ENCODE measurements at regions of chr6 and their contacts with region 1.

Region 1: DNA sequence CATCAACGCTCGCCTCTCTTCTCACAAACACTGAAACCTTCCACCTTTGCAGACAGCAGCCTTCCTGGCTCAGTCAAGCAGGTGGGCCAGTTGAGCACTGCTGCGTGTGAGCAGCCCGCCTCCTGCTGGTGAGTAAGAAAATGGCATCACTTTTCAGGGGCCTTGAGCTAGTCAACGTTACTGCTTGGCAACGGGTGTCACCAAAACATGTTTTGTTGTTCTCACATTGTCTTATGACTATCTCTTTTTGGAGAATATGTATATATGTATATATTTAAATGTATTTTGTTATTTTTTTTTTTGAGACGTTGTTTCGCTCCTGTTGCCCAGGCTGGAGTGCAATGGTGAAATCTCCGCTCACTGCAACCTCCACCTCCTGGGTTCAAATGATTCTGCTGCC is 97.0 kb upstream of the AGPAT4 start:
- DNase-seq: peak; percentile 77
- H3K4me3 Mint-ChIP-seq: no peak overlapping the region
- H3K27ac Mint-ChIP-seq: no peak overlapping the region
- H3K4me1 Mint-ChIP-seq: peaks cover 13% of the 10 kb centered on the region
- H3K27me3 Mint-ChIP-seq: no peaks in the 10 kb centered on the region
- CTCF ChIP-seq: peak; percentile 95

Region 2: GRCh38 chr6:160520043-160520904 is 850.6 kb before region 1 on chr6:
- CTCF ChIA-PET with region 1: interaction called, 6 read pairs
- POLR2A ChIA-PET with region 1: no interaction called
- intact Hi-C with region 1: loop called (anchors 5 kb)
- DNase-seq: peak; percentile 75
- H3K4me3 Mint-ChIP-seq: peak overlapping the region; percentile 93
- H3K27ac Mint-ChIP-seq: peak overlapping the region; percentile 67
- H3K4me1 Mint-ChIP-seq: peaks cover 10% of the 10 kb centered on the region
- H3K27me3 Mint-ChIP-seq: no peaks in the 10 kb centered on the region
- CTCF ChIP-seq: no peak

Region 3: DNA sequence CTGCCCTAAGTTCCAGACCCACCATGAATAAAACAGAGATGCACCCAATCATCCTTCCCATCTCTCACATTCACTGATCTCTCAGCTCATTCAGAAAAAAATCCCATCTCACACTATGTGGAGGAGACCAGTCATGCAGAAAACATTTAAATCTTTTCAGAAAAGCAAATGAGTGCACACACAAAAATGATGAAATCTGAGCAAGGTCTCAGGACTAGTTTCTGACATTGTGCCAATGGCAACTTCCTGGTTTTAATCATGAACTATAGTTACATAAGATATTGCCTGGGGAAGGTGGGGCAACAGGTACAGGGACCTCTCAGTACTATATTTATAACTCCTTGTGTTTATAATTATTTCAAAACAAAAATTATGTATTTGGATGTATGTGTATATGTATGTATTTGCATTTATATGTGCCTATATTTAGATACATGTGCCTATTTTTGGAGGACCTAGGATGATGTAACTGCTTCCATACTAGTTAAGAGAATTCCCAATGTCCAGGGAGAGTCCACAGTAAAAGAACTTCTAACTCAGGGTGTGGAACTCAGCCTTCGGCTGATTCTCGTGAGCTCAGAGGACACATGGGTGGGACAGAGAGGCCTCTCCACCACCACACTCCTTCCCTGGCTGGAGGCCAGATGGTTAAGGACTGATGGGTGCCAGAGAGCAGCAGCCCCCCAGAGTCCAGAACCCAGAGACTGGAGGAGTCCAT is 451.0 kb before region 1 on chr6:
- CTCF ChIA-PET with region 1: interaction called, 113 read pairs
- POLR2A ChIA-PET with region 1: no interaction called
- intact Hi-C with region 1: no loop called
- DNase-seq: peak; percentile 97
- H3K4me3 Mint-ChIP-seq: no peak overlapping the region
- H3K27ac Mint-ChIP-seq: peak overlapping the region; percentile 59
- H3K4me1 Mint-ChIP-seq: peaks cover 23% of the 10 kb centered on the region
- H3K27me3 Mint-ChIP-seq: no peaks in the 10 kb centered on the region
- CTCF ChIP-seq: no peak

Region 4: GRCh38 chr6:161091972-161092701 is 278.7 kb before region 1 on chr6:
- CTCF ChIA-PET with region 1: interaction called, 14 read pairs
- POLR2A ChIA-PET with region 1: interaction called, 6 read pairs
- intact Hi-C with region 1: no loop called
- DNase-seq: peak; percentile 41
- H3K4me3 Mint-ChIP-seq: peak overlapping the region; percentile 21
- H3K27ac Mint-ChIP-seq: peak overlapping the region; percentile 81
- H3K4me1 Mint-ChIP-seq: peaks cover 22% of the 10 kb centered on the region
- H3K27me3 Mint-ChIP-seq: no peaks in the 10 kb centered on the region
- CTCF ChIP-seq: no peak

Region 5: DNA sequence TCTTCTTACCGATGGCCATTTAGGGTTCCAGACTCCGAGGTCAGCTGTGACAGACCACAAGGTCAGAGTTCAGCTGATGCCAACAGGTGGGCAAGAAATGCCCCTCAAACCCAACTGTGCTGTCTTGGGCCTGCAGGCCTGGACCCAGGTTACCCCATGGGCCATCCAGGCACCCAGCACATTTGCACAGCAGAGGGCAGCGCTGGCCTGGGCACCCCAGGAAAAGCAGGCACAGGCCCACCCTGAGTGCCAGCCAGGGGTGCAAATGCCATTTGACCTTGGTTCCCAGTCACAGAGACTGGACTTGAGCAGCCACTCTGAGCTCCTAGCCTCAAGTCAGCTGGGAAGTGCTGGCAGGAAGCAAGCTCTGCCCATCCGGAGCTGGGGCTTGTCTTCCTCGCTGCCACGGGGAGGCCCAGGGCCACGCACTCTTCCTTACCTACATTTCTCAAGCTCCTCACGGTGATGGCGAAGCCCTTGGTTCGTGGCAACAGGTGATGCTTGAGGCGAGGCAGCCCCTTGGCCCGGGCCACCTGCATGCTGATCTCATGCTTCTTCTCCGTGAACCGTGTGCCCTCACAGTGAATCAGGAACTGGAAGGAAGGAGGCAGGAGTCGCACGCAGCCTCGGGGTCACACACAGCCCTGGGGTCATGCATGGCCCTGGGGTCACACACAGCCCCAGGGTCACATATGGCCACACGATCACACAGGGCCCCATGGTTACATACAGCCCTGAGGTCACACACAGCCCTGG is 217.8 kb before region 1 on chr6:
- CTCF ChIA-PET with region 1: interaction called, 92 read pairs
- POLR2A ChIA-PET with region 1: interaction called, 3 read pairs
- intact Hi-C with region 1: no loop called
- DNase-seq: peak; percentile 23
- H3K4me3 Mint-ChIP-seq: no peak overlapping the region
- H3K27ac Mint-ChIP-seq: no peak overlapping the region
- H3K4me1 Mint-ChIP-seq: no peaks in the 10 kb centered on the region
- H3K27me3 Mint-ChIP-seq: no peaks in the 10 kb centered on the region
- CTCF ChIP-seq: peak; percentile 50

Region 6: DNA sequence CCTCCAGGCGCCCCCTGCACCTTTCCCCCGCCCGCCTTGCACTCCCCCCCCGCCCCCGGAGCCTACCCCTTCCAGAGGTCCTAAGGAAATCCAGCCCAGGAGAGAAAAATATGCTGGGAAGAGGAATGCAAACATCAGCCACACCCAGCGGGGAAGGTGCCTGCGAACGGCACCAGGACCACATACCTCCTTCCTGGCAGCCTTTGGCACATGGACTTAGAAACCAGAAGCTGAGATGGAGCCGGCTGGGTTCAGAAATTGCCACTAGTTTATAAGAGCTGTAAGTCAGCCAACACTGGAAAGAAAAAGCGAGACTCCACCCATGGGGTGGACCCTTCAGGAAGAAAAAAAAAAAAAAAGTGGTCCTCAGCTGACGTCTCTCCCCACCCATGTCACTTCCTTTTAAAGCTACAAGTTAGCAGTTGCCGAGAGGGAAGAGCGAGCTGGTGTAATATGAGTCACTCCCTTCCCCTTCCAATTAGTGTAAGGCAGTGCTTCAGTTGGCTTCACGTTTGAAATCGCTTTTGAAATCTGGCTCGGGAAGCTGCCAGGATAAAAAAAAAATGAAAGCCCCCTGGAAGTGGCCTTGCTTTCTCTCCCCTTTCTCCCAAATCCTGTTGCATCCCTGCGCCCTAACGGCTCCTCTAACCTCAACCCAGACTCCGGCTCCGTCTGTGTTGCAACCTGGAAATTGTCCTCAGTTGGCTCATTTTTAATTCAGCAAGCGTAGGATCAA is 97.0 kb before region 1 on chr6 and contains the start of gene AGPAT4:
- CTCF ChIA-PET with region 1: interaction called, 12 read pairs
- POLR2A ChIA-PET with region 1: interaction called, 4 read pairs
- intact Hi-C with region 1: loop called (anchors 1 kb)
- DNase-seq: peak; percentile 97
- H3K4me3 Mint-ChIP-seq: peak within 1 kb of the TSS; percentile 80
- H3K27ac Mint-ChIP-seq: peak within 1 kb of the TSS; percentile 98
- H3K4me1 Mint-ChIP-seq: peaks cover 15% of the 10 kb centered on the region
- H3K27me3 Mint-ChIP-seq: no peaks in the 10 kb centered on the region
- CTCF ChIP-seq: no peak
- total RNA-seq, gene AGPAT4: 5.6 and 7.3 TPM in 2 replicates

Region 7: GRCh38 chr6:161721511-161721910 is 350.6 kb after region 1 on chr6:
- CTCF ChIA-PET with region 1: no interaction called
- POLR2A ChIA-PET with region 1: no interaction called
- intact Hi-C with region 1: no loop called
- DNase-seq: no peak
- H3K4me3 Mint-ChIP-seq: no peak overlapping the region
- H3K27ac Mint-ChIP-seq: no peak overlapping the region
- H3K4me1 Mint-ChIP-seq: no peaks in the 10 kb centered on the region
- H3K27me3 Mint-ChIP-seq: no peaks in the 10 kb centered on the region
- CTCF ChIP-seq: no peak